ENCODE measurements at regions of chr4 and their contacts with region 1.

Region 1: GRCh38 chr4:168612450-168613139 is 115.7 kb downstream of the PALLD start:
- DNase-seq: no peak
- H3K4me3 ChIP-seq: no peak overlapping the region
- H3K27me3 ChIP-seq: no peaks in the 10 kb centered on the region
- CTCF ChIP-seq: no peak

Region 2: DNA sequence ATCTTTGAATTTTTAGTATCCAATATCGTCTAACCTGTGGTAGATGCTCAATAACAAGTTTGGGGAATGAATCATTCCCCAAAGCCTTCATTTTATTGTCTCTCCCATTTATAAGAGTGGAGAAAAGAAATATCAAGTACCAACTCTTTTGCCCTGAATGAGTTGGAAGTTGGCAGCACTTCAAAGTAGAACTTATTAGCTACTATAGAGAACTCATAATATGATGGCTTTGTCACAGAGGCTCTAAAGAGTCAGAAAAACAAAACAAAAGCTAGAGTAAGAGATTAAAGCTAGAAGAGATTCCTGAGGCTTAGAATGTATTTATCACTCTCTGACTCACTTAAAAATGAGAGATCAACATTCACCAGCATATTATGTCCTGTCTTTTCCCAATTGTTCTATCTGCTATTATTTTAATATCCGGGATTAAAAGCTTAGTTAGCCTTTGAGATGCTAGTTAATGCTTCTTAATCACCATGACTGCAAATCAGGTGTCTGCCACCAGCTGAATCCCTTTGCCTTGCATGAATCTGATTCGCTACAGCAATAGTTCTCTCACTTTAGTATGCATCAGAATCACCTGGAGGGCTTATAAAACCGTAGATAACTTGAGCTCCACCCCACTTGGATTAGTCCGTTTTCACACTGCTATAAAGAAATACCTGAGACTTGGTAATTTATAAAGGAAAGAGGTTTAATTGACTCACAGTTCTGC is 37.9 kb before region 1 on chr4:
- CTCF ChIA-PET with region 1: no interaction called
- POLR2A ChIA-PET with region 1: interaction called, 12 read pairs
- DNase-seq: no peak
- H3K4me3 ChIP-seq: no peak overlapping the region
- H3K27me3 ChIP-seq: no peaks in the 10 kb centered on the region
- CTCF ChIP-seq: no peak

Region 3: GRCh38 chr4:168847771-168848511 is 235.3 kb after region 1 on chr4:
- CTCF ChIA-PET with region 1: no interaction called
- POLR2A ChIA-PET with region 1: no interaction called
- DNase-seq: no peak
- H3K4me3 ChIP-seq: peak overlapping the region; percentile 15
- H3K27me3 ChIP-seq: no peaks in the 10 kb centered on the region
- CTCF ChIP-seq: no peak